Endothelial cell of umbilical vein (primary cell): ENCODE measurements at regions of chr14 and their contacts with region 1.

Region 1: GRCh38 chr14:73472185-73473114 is 14.1 kb upstream of the NUMB start:
- DNase-seq: peak; percentile 77
- H3K4me3 ChIP-seq: no peak overlapping the region
- H3K27ac ChIP-seq: no peak overlapping the region
- H3K4me1 ChIP-seq: no peaks in the 10 kb centered on the region
- H3K27me3 ChIP-seq: no peaks in the 10 kb centered on the region
- CTCF ChIP-seq: peak; percentile 45 to 48
- POLR2A ChIP-seq: no peak

Region 2: DNA sequence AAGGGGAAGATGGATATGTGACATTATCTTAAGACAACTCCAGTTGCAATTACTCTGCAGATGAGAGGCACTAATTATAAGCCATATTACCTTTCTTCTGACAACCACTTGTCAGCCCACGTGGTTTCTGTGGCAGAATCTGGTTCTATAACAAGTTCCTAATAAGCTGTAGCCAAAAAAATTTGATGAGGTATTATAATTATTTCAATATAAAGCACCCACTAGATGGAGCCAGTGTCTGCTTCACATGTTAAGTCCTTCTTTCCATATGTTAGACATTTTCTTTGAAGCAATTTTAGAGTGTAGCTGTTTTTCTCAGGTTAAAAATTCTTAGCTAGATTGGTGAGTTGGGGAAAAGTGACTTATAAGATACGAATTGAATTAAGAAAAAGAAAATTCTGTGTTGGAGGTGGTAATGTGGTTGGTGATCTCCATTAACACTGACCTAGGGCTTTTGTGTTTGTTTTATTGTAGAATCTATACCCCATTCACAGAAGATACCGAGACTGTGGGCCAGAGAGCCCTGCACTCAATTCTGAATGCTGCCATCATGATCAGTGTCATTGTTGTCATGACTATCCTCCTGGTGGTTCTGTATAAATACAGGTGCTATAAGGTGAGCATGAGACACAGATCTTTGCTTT is 299.2 kb before region 1 on chr14:
- CTCF ChIA-PET with region 1: interaction called, 96 read pairs
- POLR2A ChIA-PET with region 1: no interaction called
- dilution Hi-C with region 1: loop called (anchors 25 kb)
- intact Hi-C with region 1: loop called (anchors 1 kb)
- DNase-seq: peak; percentile 73
- H3K4me3 ChIP-seq: no peak overlapping the region
- H3K27ac ChIP-seq: no peak overlapping the region
- H3K4me1 ChIP-seq: no peaks in the 10 kb centered on the region
- H3K27me3 ChIP-seq: no peaks in the 10 kb centered on the region
- CTCF ChIP-seq: peak; percentile 21 to 25
- POLR2A ChIP-seq: no peak

Region 3: DNA sequence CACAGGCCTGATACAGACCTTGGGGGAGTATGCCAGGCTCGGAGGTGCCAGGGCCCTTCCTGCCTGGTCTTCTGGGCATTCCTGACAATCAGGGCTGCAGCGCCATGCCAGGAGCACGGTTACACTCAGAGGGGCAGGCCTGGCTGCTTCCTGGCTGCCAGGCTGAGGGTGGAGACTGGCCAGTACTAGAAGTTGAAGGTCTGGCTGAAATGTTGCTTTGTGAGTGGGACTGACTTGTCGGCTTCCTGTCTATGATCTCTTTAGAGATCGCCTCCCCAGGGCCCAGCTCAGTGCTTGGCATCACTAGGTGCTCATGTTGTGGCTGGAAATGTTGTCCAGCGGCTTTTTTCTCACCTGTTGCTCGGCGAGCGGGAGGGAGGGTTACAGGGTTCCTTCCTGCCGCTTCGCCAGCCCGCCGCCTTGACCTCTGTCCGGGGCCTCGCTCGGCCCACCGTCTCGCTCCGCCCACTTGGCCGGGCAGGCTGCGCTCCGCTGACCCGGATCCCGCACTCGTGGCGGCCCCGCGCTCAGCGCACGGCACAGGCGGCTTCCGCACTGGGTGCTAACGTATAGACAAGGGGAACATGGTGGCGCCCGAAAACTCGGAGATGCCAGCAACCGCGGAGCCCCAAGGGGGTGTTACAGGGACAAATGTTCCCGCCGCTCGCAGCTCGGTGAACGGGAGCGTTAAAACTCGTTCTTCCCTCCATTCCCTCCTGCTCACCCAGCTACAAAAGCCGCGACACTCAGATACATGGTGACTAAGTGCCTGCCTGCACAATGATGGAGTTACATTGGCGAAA is 202.5 kb before region 1 on chr14:
- CTCF ChIA-PET with region 1: interaction called, 11 read pairs
- POLR2A ChIA-PET with region 1: no interaction called
- dilution Hi-C with region 1: loop called (anchors 25 kb)
- intact Hi-C with region 1: no loop called
- DNase-seq: peak; percentile 61
- H3K4me3 ChIP-seq: peak overlapping the region; percentile 17 to 44 (median 32)
- H3K27ac ChIP-seq: peak overlapping the region; percentile 28
- H3K4me1 ChIP-seq: peaks cover 15% of the 10 kb centered on the region
- H3K27me3 ChIP-seq: no peaks in the 10 kb centered on the region
- CTCF ChIP-seq: no peak
- POLR2A ChIP-seq: peak; percentile 70

Region 4: DNA sequence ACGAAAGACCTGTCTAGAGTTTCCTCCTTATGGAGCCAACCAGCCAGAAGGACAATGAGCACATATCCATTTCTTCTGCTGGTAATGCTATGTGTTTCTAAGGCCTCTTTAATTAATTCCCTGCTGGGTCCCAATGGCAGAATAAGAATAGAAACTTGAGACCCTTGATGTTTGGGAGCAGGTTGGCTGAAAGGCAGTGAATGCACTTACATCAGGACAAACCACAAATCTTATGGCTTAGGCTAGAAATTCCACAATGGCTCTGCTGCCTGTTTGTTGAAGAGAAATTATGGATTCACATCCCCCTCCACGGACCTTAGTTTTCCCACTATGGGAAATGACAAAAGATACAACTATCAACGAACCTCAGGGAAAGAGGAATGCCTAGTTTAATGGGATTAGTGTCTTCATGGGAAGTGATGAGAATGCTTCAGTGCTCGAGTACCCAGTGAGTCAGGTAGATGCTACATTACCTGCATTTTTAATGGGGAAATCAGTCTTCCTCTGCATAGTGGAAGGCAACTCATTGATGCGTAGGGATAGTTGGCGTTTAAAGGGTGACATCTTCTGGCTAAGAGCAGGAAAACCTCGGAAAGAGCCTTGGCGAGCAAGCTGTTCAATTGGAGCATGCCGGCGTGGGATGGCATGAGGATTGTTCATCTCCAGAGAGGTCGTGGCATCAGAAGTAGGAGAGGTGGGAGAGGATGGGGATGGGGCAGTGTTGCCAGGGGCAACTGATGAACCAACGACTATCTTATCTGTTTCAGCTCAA is 188.7 kb before region 1 on chr14:
- CTCF ChIA-PET with region 1: interaction called, 17 read pairs
- POLR2A ChIA-PET with region 1: no interaction called
- dilution Hi-C with region 1: loop called (anchors 25 kb)
- intact Hi-C with region 1: no loop called
- DNase-seq: no peak
- H3K4me3 ChIP-seq: no peak overlapping the region
- H3K27ac ChIP-seq: no peak overlapping the region
- H3K4me1 ChIP-seq: no peaks in the 10 kb centered on the region
- H3K27me3 ChIP-seq: no peaks in the 10 kb centered on the region
- CTCF ChIP-seq: peak in 1 of 2 donors; percentile 25
- POLR2A ChIP-seq: no peak

Region 5: DNA sequence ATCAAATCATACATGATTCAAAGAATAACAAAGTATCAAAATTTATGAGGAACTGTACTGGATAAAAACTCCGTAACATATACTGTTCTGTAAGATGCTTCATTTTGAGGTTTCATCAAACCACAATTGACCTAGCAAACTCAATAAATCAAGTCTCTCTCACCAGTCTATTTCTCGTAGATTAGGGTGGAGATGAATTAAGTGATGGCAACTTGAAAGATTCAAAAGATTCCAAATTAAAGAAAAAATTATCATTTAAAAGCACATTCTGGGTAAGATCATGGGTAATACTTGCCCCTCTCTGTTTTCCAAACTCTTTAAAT is 160.8 kb before region 1 on chr14:
- CTCF ChIA-PET with region 1: interaction called, 10 read pairs
- POLR2A ChIA-PET with region 1: no interaction called
- dilution Hi-C with region 1: no loop called
- intact Hi-C with region 1: no loop called
- DNase-seq: no peak
- H3K4me3 ChIP-seq: peak overlapping the region in 1 of 3 experiments; percentile 23
- H3K27ac ChIP-seq: peak overlapping the region; percentile 31
- H3K4me1 ChIP-seq: peaks cover 20% of the 10 kb centered on the region
- H3K27me3 ChIP-seq: no peaks in the 10 kb centered on the region
- CTCF ChIP-seq: no peak
- POLR2A ChIP-seq: no peak

Region 6: GRCh38 chr14:73452341-73453186 is 19.9 kb before region 1 on chr14:
- CTCF ChIA-PET with region 1: interaction called, 12 read pairs
- POLR2A ChIA-PET with region 1: no interaction called
- dilution Hi-C with region 1: no loop called
- intact Hi-C with region 1: no loop called
- DNase-seq: peak; percentile 78
- H3K4me3 ChIP-seq: no peak overlapping the region
- H3K27ac ChIP-seq: peak overlapping the region; percentile 3
- H3K4me1 ChIP-seq: peaks cover 31% of the 10 kb centered on the region
- H3K27me3 ChIP-seq: no peaks in the 10 kb centered on the region
- CTCF ChIP-seq: no peak
- POLR2A ChIP-seq: no peak

Region 7: DNA sequence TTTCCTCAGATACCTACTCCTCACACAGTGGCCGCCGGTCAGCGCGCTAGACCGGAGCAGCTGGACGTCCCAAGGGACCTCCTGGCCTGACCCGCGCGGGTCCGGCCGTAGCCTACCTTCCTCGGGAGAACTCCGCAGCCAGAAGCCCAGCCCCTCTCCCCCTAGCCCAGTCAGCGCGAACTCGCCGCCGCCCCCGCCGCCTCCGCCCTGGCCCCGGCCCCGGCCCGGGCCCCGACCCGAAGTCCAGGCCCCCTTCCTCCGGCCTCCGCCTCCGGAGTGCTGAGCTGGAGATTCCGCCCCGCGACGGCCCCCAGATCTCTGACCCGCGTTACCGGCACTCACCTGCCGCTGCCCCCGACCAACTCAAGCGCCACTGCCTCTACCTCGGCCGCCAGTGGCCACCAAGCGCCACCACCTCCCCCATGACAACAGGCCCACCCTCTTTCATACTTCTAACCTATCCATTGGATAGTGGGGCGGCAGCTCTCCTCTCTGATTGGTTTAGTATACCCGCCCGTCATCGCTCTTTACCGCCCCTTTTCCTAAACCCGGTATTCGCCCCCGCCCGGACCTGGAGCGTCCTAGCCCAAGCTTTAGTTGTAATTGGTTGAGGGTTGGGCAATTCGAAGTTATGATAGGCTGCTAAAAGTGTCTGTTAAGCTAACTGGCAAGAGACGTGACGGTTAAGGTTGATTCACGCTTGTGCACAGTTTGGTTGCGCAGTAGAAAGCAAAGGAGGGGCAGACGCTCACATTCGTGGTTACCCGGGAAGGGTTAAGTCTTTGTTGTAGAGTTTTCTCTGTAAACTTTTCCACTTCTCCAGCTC is 14.1 kb before region 1 on chr14 and contains the start of gene NUMB:
- CTCF ChIA-PET with region 1: interaction called, 26 read pairs
- POLR2A ChIA-PET with region 1: interaction called, 3 read pairs
- dilution Hi-C with region 1: no loop called
- intact Hi-C with region 1: no loop called
- DNase-seq: peak; percentile 100
- H3K4me3 ChIP-seq: peak within 1 kb of the TSS; percentile 76 to 98 (median 98)
- H3K27ac ChIP-seq: peak within 1 kb of the TSS; percentile 79
- H3K4me1 ChIP-seq: peaks cover 67% of the 10 kb centered on the region
- H3K27me3 ChIP-seq: no peaks in the 10 kb centered on the region
- CTCF ChIP-seq: no peak
- POLR2A ChIP-seq: peak; percentile 78
- total RNA-seq, gene NUMB: 116 and 128 TPM in 2 replicates

Region 8: GRCh38 chr14:73713803-73714655 is 241.6 kb after region 1 on chr14 and contains the start of gene PNMA1:
- CTCF ChIA-PET with region 1: no interaction called
- POLR2A ChIA-PET with region 1: no interaction called
- dilution Hi-C with region 1: no loop called
- intact Hi-C with region 1: no loop called
- DNase-seq: peak; percentile 89
- H3K4me3 ChIP-seq: peak within 1 kb of the TSS; percentile 15 to 81 (median 74)
- H3K27ac ChIP-seq: peak within 1 kb of the TSS; percentile 73
- H3K4me1 ChIP-seq: peaks cover 15% of the 10 kb centered on the region
- H3K27me3 ChIP-seq: no peaks in the 10 kb centered on the region
- CTCF ChIP-seq: no peak
- POLR2A ChIP-seq: peak; percentile 91
- total RNA-seq, gene PNMA1: 82.4 and 82.6 TPM in 2 replicates